Psoas muscle (tissue), 8 donors: ENCODE measurements at regions of chr19 and their contacts with region 1.

Region 1: DNA sequence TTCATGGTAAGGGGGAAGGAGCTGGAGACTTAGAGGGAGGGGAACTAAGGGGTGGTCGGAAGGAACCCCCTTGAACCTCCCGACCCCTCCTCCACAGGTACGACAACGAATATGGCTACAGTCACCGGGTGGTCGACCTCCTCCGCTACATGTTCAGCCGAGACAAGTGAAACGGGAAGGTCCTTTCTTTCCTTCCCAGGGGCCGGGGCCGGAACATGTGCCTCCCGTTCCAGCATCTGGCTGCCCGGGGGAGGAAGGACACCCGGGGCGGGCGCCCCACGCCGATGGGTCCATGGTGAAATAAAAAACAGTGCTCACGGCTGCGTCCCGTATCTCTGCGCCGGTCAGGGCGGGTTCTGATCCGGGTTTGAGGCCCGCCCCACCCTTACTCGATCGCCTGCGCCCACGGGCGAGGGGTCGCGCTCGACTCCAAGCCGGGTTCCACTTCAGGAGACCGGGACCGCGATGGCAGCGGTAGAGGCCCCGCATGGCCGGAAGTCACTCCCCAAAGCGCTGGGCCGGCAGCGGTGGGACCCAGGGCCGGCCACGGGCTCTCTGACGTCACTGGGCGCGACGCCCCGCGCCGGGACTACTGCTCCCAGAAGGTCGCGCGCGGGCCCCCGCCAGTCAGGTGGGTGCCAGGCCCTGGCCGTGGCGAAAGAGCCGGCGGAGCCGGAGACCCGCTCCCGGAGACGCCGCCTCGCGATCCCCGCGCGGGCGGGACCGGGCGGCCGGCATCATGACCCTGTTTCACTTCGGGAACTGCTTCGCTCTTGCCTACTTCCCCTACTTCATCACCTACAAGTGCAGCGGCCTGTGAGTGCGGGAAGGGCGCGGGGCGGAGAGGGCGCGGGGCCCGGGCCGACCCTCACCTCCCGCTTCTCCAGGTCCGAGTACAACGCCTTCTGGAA is at the start of gene TMEM147:
- DNase-seq: peak; percentile 97
- ATAC-seq: peak; percentile 98 to 99 (median 99)
- H3K4me3 ChIP-seq: peak within 1 kb of the TSS; percentile 79
- H3K27ac ChIP-seq: peak within 1 kb of the TSS; percentile 90
- H3K4me1 ChIP-seq: peaks cover 27% of the 10 kb centered on the region
- H3K27me3 ChIP-seq: no peaks in the 10 kb centered on the region
- CTCF ChIP-seq: no peak
- total RNA-seq, gene TMEM147: 77.1 to 103 (median 85.5) TPM

Region 2: GRCh38 chr19:35612559-35613321 is 67.5 kb after region 1 on chr19 and contains the start of gene HAUS5:
- intact Hi-C with region 1: loop called in 1 of 2 experiments (anchors 5 kb)
- DNase-seq: peak; percentile 94 to 96
- ATAC-seq: peak; percentile 98 to 100 (median 100)
- H3K4me3 ChIP-seq: peak within 1 kb of the TSS; percentile 82
- H3K27ac ChIP-seq: peak within 1 kb of the TSS; percentile 57
- H3K4me1 ChIP-seq: peaks cover 9% of the 10 kb centered on the region
- H3K27me3 ChIP-seq: no peaks in the 10 kb centered on the region
- CTCF ChIP-seq: no peak
- total RNA-seq, gene HAUS5: 2.5 to 6.1 (median 4.8) TPM

Region 3: DNA sequence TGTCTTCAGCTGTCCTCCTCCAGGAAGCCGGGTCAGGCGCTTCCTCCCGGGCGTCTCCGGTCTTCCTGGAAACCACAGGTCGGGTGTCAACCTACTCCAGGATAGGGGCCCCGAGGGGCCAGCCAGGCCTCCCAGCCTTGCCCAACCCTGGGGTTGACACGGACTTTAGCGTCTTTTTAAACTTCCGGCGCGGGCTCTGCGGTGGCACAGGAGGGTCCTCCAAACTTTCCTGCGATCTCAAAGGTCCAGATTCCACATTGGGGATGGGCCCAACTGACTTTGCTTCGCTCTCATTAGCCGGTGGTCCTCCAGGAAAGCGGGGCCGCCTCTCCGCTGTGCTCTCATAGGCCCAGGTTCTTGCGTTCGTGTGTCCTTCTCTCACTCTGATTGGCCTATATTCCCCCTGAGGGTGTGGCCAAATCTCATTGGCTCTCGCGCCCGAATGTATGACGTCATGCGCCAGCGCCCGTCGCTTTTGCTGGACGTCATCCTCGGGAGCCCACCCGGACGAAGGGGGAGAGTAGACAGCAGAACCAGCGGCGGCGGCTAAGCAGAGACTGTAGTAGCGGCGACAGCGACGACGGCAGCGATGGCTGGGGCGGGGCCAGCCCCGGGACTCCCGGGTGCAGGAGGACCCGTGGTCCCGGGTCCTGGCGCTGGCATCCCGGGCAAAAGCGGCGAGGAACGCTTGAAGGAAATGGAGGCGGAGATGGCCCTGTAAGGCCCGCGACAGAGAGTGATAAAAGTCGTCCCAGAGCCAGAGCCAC is 83.5 kb after region 1 on chr19 and contains the start of gene RBM42:
- intact Hi-C with region 1: loop called in 1 of 2 experiments (anchors 2 kb)
- DNase-seq: peak; percentile 96 to 97
- ATAC-seq: peak; percentile 100
- H3K4me3 ChIP-seq: peak within 1 kb of the TSS; percentile 83
- H3K27ac ChIP-seq: peak within 1 kb of the TSS; percentile 94
- H3K4me1 ChIP-seq: peaks cover 13% of the 10 kb centered on the region
- H3K27me3 ChIP-seq: no peaks in the 10 kb centered on the region
- CTCF ChIP-seq: no peak
- total RNA-seq, gene RBM42: 50.1 to 68.1 (median 59.1) TPM

Region 4: GRCh38 chr19:35648017-35648961 is 103.0 kb after region 1 on chr19 and contains the start of gene COX6B1:
- intact Hi-C with region 1: loop called in 1 of 2 experiments (anchors 5 kb)
- DNase-seq: peak; percentile 92 to 95
- ATAC-seq: peak; percentile 84 to 91 (median 90)
- H3K4me3 ChIP-seq: peak within 1 kb of the TSS; percentile 97
- H3K27ac ChIP-seq: peak within 1 kb of the TSS; percentile 91
- H3K4me1 ChIP-seq: peaks cover 20% of the 10 kb centered on the region
- H3K27me3 ChIP-seq: no peaks in the 10 kb centered on the region
- CTCF ChIP-seq: no peak
- total RNA-seq, gene COX6B1: 631 to 878 (median 757) TPM

Region 5: DNA sequence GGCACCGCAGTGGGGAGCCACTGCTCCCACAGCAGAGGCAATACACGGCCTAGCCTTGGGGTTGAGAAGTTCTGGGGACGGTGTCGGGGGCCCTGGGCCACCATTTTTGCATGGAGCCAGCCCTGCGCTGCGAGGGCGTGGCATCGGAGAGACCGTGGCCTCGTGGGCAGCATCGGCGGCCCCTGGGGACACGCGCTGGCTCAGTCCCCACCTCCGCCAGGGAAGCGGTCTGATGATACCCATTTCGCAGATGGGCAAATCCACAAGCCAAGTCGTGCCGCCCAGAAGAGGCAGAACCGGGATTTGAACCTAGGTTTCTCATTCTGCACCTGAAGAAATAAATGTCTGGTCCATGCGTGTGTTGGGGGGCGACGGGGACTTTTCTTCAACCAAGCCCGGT is 119.9 kb after region 1 on chr19:
- intact Hi-C with region 1: no loop called
- DNase-seq: no peak
- ATAC-seq: no peak
- H3K4me3 ChIP-seq: no peak overlapping the region
- H3K27ac ChIP-seq: no peak overlapping the region
- H3K4me1 ChIP-seq: no peaks in the 10 kb centered on the region
- H3K27me3 ChIP-seq: no peaks in the 10 kb centered on the region
- CTCF ChIP-seq: no peak

Region 6: GRCh38 chr19:35716801-35717666 is 171.8 kb after region 1 on chr19:
- intact Hi-C with region 1: loop called (anchors 1 to 5 kb)
- DNase-seq: peak; percentile 90 to 93
- ATAC-seq: peak; percentile 91 to 93 (median 92)
- H3K4me3 ChIP-seq: peak overlapping the region; percentile 90
- H3K27ac ChIP-seq: peak overlapping the region; percentile 94
- H3K4me1 ChIP-seq: peaks cover 23% of the 10 kb centered on the region
- H3K27me3 ChIP-seq: no peaks in the 10 kb centered on the region
- CTCF ChIP-seq: peak; percentile 90